ENCODE measurements at regions of chr5 and their contacts with region 1.

Region 1: DNA sequence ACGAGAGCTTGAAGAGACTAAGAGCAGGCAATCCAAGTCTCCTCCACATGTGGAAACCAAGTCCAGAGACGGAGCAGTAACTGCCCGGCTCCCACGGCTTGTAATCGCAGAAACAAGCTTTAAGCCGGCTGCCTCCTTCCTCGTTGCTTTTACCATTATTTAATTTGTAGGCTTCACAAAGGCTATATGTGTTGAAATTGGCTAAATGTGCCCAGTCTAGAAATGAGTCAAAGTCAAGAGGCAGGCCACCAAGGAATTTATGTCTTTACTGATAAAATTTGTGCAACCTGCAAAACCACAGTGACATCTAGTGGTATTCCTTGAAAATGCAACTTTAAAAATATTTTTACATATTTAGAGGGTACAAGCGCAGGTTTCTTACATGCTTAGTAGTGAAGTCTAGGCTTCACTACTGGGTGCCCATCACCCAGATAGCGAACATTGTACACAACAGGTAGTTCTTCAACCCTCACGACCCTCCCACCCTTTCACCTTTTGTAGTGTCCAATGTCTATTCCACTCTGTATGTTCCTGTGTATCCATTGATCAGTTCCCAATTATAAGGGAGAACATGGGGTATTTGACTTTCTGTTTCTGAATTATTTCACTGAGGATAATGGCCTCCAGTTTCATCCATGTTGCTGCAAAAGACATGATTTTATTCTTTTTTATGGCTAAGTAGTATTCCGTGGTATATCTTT is 33.5 kb upstream of the EBF1 start:
- DNase-seq: peak in 4 of 5 donors; percentile 27 to 45 (median 33)
- H3K4me3 ChIP-seq: no peak overlapping the region
- H3K27ac ChIP-seq: peak overlapping the region in 1 of 2 donors; percentile 43
- H3K4me1 ChIP-seq: no peaks in the 10 kb centered on the region
- H3K27me3 ChIP-seq: no peaks in the 10 kb centered on the region
- CTCF ChIP-seq: peak; percentile 82 to 88 (median 82)
- EP300 ChIP-seq: no peak
- POLR2A ChIP-seq: no peak

Region 2: GRCh38 chr5:157761690-157762621 is 1371.2 kb before region 1 on chr5:
- intact Hi-C with region 1: loop called in 2 of 4 experiments (anchors 5 kb)
- DNase-seq: peak in 1 of 5 donors; percentile 33
- H3K4me3 ChIP-seq: no peak overlapping the region
- H3K27ac ChIP-seq: no peak overlapping the region
- H3K4me1 ChIP-seq: no peaks in the 10 kb centered on the region
- H3K27me3 ChIP-seq: no peaks in the 10 kb centered on the region
- CTCF ChIP-seq: peak; percentile 15 to 64 (median 36)
- EP300 ChIP-seq: no peak
- POLR2A ChIP-seq: no peak

Region 3: DNA sequence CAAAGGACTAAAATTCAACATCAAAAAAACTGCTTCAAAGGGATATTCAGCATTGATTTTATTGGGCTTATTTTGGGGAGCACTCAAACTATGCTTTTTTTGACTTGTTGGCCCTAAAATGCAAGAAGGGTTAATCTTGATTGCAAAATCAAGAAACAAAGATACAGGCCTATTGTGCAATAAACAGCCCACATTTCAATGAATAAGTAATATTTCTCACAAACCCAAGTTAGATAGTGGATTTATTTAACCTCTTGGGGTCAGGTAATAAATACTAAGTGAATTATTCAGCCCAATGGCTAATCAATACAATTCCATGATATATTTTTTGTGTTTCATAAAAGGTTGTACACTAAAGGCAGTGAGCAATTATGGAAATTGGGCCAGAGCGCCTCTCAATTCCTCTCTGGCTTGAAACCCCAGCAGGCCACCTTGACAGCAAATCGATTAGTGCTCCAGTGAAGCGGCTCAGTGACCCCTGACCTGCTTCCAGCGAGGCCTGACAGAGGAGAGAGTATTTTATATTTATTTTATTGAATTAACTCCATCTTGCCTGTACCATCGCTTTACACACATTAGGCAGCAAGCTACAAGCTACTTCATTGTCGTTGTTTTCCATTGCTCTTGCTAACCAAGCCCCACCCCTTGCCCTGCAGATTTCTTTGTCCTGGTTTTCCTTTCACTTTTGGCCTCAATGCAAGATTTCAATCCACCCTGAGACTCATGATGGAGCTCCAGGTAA is 98.9 kb before region 1 on chr5:
- intact Hi-C with region 1: no loop called
- DNase-seq: no peak
- H3K4me3 ChIP-seq: no peak overlapping the region
- H3K27ac ChIP-seq: no peak overlapping the region
- H3K4me1 ChIP-seq: peaks cover 7% of the 10 kb centered on the region
- H3K27me3 ChIP-seq: no peaks in the 10 kb centered on the region
- CTCF ChIP-seq: no peak
- EP300 ChIP-seq: no peak
- POLR2A ChIP-seq: no peak

Region 4: GRCh38 chr5:159198063-159199036 is 65.2 kb after region 1 on chr5:
- intact Hi-C with region 1: no loop called
- DNase-seq: no peak
- H3K4me3 ChIP-seq: no peak overlapping the region
- H3K27ac ChIP-seq: no peak overlapping the region
- H3K4me1 ChIP-seq: no peaks in the 10 kb centered on the region
- H3K27me3 ChIP-seq: no peaks in the 10 kb centered on the region
- CTCF ChIP-seq: no peak
- EP300 ChIP-seq: no peak
- POLR2A ChIP-seq: no peak